CD8-positive, alpha-beta memory T cell (primary cell): ENCODE measurements at regions of chr1 and their contacts with region 1.

Region 1: DNA sequence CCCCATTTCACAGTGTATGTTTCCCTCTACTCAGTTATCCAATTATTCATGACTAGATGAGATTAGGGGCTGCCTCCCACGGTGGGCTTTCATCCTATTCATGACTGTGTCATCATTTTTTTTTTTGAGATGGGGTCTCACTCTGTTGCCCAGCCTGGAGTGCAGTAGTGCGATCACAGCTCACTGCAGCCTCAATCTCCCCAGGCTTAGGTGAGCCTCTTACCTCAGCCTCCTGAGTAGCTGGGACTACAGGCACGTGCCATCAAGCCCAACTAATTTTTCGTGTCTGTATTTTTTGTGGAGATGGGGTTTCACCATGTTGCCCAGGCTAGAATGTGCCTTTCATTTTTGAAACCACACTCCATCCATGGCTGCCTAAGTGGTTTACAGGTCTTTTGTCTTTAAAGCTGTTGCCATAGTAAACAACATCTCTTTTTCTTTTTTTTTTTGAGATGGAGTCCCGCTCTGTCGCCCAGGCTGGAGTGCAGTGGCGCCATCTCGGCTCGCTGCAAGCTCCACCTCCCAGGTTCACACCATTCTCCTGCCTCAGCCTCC is 60.0 kb downstream of the PIK3CD start:
- DNase-seq: peak in 1 of 5 donors; percentile 50
- H3K4me3 ChIP-seq: no peak overlapping the region
- H3K4me3 Mint-ChIP-seq: peak overlapping the region in 2 of 7 donors; percentile 23 to 60
- H3K27ac ChIP-seq: no peak overlapping the region
- H3K27ac Mint-ChIP-seq: peak overlapping the region; percentile 26 to 93 (median 76)
- H3K4me1 ChIP-seq: peaks cover 51% of the 10 kb centered on the region
- H3K4me1 Mint-ChIP-seq: peaks cover 37 to 71% (median 41%) of the 10 kb centered on the region in 3 donors
- H3K27me3 ChIP-seq: no peaks in the 10 kb centered on the region
- H3K27me3 Mint-ChIP-seq: no peaks in the 10 kb centered on the region

Region 2: DNA sequence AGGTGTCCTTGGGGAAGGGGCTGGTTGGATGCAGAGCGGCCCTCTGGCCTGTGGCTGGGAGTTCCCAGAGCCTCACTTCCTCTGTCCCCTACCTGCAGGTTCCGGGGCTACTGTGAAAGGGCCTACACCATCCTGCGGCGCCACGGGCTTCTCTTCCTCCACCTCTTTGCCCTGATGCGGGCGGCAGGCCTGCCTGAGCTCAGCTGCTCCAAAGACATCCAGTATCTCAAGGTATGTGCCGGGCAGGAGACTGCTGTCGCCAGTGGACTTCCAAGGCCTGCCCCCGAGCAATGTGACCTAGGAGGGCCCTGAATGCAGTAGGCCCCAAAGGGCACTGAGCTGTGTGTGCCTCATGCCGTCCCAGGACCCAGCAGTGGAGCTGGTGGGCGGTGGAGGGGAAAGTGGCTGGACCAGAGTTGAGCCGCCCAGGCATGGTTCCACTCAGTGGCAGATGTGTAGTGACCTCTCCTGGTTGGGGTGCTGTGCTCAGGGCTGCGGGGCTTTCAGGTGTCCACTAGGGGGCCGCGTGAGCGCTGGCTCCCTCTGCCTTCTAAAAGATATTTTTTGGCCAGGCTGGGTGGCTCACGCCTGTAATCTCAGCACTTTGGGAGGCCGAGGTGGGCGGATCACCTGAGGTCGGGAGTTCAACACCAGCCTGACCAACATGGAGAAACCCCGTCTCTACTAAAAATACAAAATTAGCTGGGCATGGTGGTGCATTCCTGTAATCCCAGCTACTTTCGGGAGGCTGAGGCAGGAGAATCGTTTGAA is 13.3 kb after region 1 on chr1:
- CTCF ChIA-PET with region 1: interaction called, 40 read pairs
- POLR2A ChIA-PET with region 1: interaction called, 5 read pairs
- DNase-seq: peak; percentile 53 to 78 (median 62)
- H3K4me3 ChIP-seq: no peak overlapping the region
- H3K4me3 Mint-ChIP-seq: peak overlapping the region in 1 of 7 donors; percentile 31
- H3K27ac ChIP-seq: no peak overlapping the region
- H3K27ac Mint-ChIP-seq: peak overlapping the region in 7 of 8 donors; percentile 21 to 90 (median 64)
- H3K4me1 ChIP-seq: peaks cover 88% of the 10 kb centered on the region
- H3K4me1 Mint-ChIP-seq: peaks cover 32 to 68% (median 38%) of the 10 kb centered on the region in 3 donors
- H3K27me3 ChIP-seq: no peaks in the 10 kb centered on the region
- H3K27me3 Mint-ChIP-seq: peaks cover 0 to 5% of the 10 kb centered on the region in 2 donors

Region 3: DNA sequence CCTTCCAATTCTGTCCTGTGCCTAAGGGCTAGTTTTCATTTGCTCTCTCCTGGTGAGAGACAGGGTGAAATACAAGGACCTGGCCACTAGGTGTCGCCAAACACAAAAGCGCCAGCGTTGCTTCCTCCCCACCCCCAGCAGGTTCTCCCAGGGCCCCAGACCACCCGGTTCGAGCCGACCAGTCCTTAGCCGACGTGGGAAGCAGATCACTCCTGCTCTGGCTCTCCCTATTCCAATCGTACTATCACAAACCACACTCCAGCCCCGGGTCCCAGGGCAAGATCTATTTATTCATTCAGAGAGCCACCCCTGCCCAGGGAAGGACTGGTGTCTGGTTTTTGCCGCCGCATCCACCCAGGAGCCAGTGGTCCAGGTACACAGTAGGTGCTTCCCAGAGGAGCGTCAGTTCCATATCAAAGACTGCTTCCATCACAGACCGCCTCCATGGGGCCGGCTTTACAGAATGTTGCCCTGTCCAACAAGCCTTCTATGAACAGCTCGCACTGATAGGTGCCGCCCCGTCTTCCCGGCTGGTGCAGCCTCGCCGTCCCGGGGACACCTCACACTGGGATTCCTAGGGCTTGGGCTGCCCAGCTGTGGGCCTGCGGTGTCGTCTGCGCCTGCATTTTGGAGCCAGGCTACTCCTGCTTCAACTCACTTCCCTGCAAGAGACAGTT is 163.6 kb after region 1 on chr1:
- CTCF ChIA-PET with region 1: no interaction called
- POLR2A ChIA-PET with region 1: no interaction called
- DNase-seq: peak; percentile 61 to 78 (median 65)
- H3K4me3 ChIP-seq: no peak overlapping the region
- H3K4me3 Mint-ChIP-seq: no peak overlapping the region
- H3K27ac ChIP-seq: no peak overlapping the region
- H3K27ac Mint-ChIP-seq: peak overlapping the region in 5 of 8 donors; percentile 2 to 82 (median 38)
- H3K4me1 ChIP-seq: peaks cover 6% of the 10 kb centered on the region
- H3K4me1 Mint-ChIP-seq: peaks cover 4 to 6% (median 6%) of the 10 kb centered on the region in 3 donors
- H3K27me3 ChIP-seq: no peaks in the 10 kb centered on the region
- H3K27me3 Mint-ChIP-seq: no peaks in the 10 kb centered on the region